GM10248 (cell line): ENCODE measurements at regions of chr17 and their contacts with region 1.

Region 1: GRCh38 chr17:68435876-68436842 is 21.1 kb downstream of the WIPI1 start:
- DNase-seq: peak; percentile 78
- CTCF ChIP-seq: peak; percentile 97

Region 2: DNA sequence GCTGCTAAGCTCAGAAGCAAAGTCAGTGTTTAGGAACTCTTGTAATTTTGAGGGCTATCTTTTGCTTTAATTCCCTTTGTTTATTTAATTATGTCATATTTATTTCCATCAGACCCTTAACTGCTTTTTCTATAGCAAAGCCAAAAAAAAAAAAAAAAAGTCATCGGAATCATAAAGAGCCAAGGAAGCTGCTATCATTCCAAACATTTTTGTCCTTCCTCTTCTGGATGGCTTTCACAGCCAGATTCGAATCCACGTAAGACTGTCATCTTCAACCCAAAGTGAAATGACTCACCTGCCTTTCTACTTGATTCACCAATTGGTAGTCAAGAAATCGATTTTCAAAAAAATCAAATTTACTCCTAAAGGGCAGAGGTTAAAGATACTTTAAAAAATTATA is 17.3 kb before region 1 on chr17:
- CTCF ChIA-PET with region 1: interaction called, 23 read pairs
- POLR2A ChIA-PET with region 1: no interaction called
- DNase-seq: no peak
- CTCF ChIP-seq: no peak

Region 3: DNA sequence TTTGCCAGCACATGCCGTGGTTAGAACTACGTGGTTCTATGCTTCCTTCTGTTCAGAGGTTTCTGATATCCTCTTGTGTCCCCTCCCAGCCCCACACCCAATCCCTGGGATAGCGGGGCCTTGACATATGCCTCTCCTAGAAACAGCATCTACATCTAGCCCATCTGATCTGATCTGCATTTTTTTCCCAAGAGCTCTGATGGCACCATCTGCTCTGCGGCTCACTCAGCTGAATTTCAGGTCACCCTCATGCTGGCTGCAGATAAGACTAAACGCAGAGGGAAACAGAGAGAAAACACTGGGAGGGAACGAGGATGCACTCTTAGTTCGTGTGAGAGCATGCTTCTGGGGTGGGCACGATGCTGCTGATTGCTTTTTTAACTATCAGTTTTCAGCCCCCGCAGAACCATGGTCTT is 10.5 kb after region 1 on chr17:
- CTCF ChIA-PET with region 1: interaction called, 36 read pairs
- POLR2A ChIA-PET with region 1: no interaction called
- DNase-seq: no peak
- CTCF ChIP-seq: no peak

Region 4: GRCh38 chr17:68457539-68458259 is 21.5 kb after region 1 on chr17:
- CTCF ChIA-PET with region 1: interaction called, 20 read pairs
- POLR2A ChIA-PET with region 1: interaction called, 5 read pairs
- DNase-seq: peak; percentile 98
- CTCF ChIP-seq: no peak